ENCODE measurements at regions of chr3 and their contacts with region 1.

Region 1: GRCh38 chr3:111668912-111669488 is 73.9 kb upstream of the ZBED2 start:
- DNase-seq: no peak
- ATAC-seq: peak; percentile 90
- H3K4me3 Mint-ChIP-seq: no peak overlapping the region
- H3K27ac Mint-ChIP-seq: no peak overlapping the region
- H3K4me1 Mint-ChIP-seq: peaks cover 9% of the 10 kb centered on the region
- H3K27me3 Mint-ChIP-seq: peaks cover 19% of the 10 kb centered on the region
- CTCF ChIP-seq: peak; percentile 47

Region 2: DNA sequence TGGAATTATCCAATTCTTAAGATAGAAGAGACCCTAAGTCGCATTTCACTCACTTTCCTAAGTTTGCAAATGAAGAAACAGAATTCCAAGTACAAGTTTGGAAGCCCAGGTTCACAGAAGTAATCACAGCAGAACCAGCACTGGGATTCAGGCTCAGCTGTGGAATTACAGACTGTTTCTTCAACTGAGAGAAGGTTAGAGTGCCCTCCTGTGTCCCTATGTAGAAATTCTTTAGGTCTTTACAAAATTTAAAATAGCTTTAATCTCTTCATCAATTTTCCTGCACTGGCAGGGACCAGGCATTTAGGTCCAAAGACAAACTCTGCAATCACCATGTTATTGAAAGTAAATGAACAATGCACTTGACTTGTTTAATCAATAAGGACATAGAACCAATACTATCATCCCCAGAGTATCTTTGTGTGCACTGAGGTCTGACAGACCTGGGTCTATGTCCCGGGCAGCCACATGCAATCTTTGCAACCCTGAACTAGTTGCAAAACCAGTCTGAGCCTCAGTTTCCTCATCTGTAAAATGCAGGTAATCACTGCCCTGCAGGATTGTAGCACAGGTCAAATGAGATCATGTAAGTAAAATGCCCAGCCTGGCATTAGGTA is 22.4 kb after region 1 on chr3:
- CTCF ChIA-PET with region 1: interaction called, 41 read pairs
- POLR2A ChIA-PET with region 1: no interaction called
- DNase-seq: no peak
- ATAC-seq: peak; percentile 82
- H3K4me3 Mint-ChIP-seq: no peak overlapping the region
- H3K27ac Mint-ChIP-seq: no peak overlapping the region
- H3K4me1 Mint-ChIP-seq: peaks cover 10% of the 10 kb centered on the region; the same call in 1 of the 2 replicates
- H3K27me3 Mint-ChIP-seq: no peaks in the 10 kb centered on the region
- CTCF ChIP-seq: no peak

Region 3: GRCh38 chr3:111819912-111820311 is 150.9 kb after region 1 on chr3:
- CTCF ChIA-PET with region 1: no interaction called
- POLR2A ChIA-PET with region 1: no interaction called
- DNase-seq: no peak
- ATAC-seq: no peak
- H3K4me3 Mint-ChIP-seq: no peak overlapping the region
- H3K27ac Mint-ChIP-seq: no peak overlapping the region
- H3K4me1 Mint-ChIP-seq: peaks cover 3% of the 10 kb centered on the region; the same call in 1 of the 2 replicates
- H3K27me3 Mint-ChIP-seq: no peaks in the 10 kb centered on the region; the same call in 1 of the 2 replicates
- CTCF ChIP-seq: no peak

Region 4: GRCh38 chr3:111831840-111832239 is 162.8 kb after region 1 on chr3:
- CTCF ChIA-PET with region 1: no interaction called
- POLR2A ChIA-PET with region 1: no interaction called
- DNase-seq: no peak
- ATAC-seq: no peak
- H3K4me3 Mint-ChIP-seq: no peak overlapping the region
- H3K27ac Mint-ChIP-seq: no peak overlapping the region
- H3K4me1 Mint-ChIP-seq: no peaks in the 10 kb centered on the region
- H3K27me3 Mint-ChIP-seq: peaks cover 26% of the 10 kb centered on the region
- CTCF ChIP-seq: no peak

Region 5: GRCh38 chr3:112149136-112149535 is 480.1 kb after region 1 on chr3:
- CTCF ChIA-PET with region 1: no interaction called
- POLR2A ChIA-PET with region 1: no interaction called
- DNase-seq: no peak
- ATAC-seq: no peak
- H3K4me3 Mint-ChIP-seq: no peak overlapping the region
- H3K27ac Mint-ChIP-seq: no peak overlapping the region
- H3K4me1 Mint-ChIP-seq: no peaks in the 10 kb centered on the region
- H3K27me3 Mint-ChIP-seq: no peaks in the 10 kb centered on the region
- CTCF ChIP-seq: no peak

Region 6: DNA sequence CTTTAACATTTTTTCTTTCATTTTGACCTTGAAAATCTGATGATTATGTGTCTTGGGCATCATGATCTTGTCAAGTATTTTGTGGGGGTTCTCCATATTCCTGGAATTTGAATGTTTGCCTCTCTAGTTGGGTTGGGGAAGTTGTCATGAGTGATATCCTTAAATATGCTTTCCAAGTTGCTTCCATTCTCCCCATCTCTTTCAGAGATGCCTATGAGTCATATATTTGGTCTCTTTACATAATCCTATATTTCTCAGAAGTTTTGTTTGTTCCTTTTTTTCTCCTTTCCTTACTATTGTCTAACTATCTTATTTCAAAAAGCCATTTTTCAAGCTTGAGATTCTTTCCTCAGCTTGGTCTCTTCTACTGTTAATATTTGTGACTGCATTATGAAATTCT is 1040.9 kb after region 1 on chr3:
- CTCF ChIA-PET with region 1: no interaction called
- POLR2A ChIA-PET with region 1: no interaction called
- DNase-seq: no peak
- ATAC-seq: no peak
- H3K4me3 Mint-ChIP-seq: no peak overlapping the region
- H3K27ac Mint-ChIP-seq: no peak overlapping the region
- H3K4me1 Mint-ChIP-seq: no peaks in the 10 kb centered on the region
- H3K27me3 Mint-ChIP-seq: no peaks in the 10 kb centered on the region; the same call in 1 of the 2 replicates
- CTCF ChIP-seq: no peak

Measured in WTC11 (cell line).